ENCODE measurements at regions of chr12 and their contacts with region 1.

Region 1: DNA sequence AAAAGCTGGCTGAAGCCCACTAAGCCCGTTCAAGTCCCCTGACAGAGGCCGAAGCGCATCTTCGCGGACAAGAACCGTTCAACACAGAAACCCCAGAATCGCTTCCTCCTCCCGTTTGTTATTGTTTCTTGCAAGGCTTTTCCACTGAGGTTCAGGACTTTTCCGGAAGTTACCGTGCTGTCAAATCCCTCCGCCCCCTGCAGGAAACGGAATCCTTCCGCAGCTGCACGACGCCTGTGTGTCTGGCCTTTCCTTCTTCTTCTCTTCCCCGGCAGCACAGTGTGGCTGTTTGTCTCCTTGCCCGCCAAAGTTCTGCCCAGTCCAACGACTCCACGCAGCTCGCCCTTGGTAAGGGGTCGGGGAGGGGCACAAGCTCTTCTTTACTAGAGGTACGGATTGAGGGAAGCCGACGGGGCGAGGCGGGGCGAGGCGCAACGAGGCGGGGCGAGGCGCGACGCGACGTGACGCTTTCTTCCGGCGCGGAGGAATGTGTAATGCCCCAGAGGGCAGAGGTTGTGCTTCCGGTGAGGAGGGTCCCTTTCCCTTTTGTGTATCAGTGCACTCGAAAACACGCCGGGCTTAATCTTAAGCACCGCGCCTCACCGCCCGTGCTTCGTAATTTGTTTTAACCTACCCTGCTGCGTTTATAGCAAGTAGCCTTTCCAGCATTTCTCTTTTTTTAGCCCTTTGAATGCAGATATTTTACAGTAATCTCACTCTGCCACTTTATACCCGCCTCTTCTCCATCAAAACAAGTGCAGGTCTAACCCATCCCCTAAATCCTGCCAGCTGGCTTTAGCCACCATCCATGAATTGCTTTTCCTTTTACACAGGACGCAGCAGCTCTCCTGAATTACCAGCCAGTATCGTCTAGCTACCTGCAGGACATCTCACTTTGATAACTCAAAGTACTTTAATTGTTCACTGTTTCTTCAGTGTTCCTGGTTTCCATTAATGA is at the start of gene KDM5A:
- DNase-seq: peak; percentile 93
- ATAC-seq: peak; percentile 93
- H3K4me3 Mint-ChIP-seq: peak within 1 kb of the TSS; percentile 76
- H3K27ac Mint-ChIP-seq: peak within 1 kb of the TSS; percentile 99
- H3K4me1 Mint-ChIP-seq: peaks cover 17% of the 10 kb centered on the region
- H3K27me3 Mint-ChIP-seq: no peaks in the 10 kb centered on the region
- CTCF ChIP-seq: no peak
- total RNA-seq, gene KDM5A: 60.0 to 68.9 TPM

Region 2: DNA sequence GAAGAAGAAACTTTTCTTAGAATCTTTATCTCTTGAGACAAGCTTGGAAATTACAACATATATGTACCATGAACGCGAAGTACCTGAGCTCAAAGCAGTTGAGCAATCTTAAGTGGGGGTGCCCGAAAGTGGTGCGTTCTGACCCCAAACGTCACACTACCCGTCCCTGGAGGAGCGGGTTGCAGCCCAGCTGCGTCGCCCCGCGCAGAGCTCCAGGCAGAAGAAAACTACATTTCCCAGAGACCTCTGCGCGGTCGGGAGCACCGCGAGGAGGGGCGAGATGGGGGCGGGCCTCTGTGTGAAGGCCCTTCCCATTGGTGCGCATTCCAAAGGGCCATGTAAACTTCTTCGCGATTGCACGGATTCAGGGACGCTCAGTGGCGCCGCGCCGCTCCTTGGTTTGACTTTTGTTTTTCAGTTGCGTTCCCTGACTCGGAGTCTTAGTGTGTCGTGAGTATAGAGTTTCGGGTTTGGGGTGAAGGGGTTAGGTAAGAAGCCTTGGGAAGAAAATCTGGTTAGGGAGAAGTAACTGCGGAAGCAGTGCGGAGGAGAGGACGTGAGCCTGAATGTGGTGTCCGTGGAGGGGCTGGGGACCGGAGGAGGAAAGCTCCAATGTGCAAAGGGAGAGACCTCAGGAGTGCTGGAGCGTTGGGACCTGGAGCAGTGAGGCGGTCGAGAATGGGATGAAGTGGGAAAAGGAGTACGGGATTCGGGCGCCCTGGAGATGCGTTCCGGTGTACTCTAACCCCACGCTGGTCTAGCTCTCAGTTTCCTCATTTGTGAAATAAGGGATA is 12.0 kb after region 1 on chr12 and contains the start of gene CCDC77:
- CTCF ChIA-PET with region 1: interaction called, 21 read pairs
- POLR2A ChIA-PET with region 1: interaction called, 38 read pairs
- intact Hi-C with region 1: no loop called
- DNase-seq: peak; percentile 95
- ATAC-seq: peak; percentile 100
- H3K4me3 Mint-ChIP-seq: no peak within 1 kb of the TSS
- H3K27ac Mint-ChIP-seq: no peak within 1 kb of the TSS
- H3K4me1 Mint-ChIP-seq: peaks cover 3% of the 10 kb centered on the region
- H3K27me3 Mint-ChIP-seq: no peaks in the 10 kb centered on the region
- CTCF ChIP-seq: no peak
- total RNA-seq, gene CCDC77: 14.0 to 19.0 TPM